ENCODE measurements at regions of chr10 and their contacts with region 1.

Region 1: DNA sequence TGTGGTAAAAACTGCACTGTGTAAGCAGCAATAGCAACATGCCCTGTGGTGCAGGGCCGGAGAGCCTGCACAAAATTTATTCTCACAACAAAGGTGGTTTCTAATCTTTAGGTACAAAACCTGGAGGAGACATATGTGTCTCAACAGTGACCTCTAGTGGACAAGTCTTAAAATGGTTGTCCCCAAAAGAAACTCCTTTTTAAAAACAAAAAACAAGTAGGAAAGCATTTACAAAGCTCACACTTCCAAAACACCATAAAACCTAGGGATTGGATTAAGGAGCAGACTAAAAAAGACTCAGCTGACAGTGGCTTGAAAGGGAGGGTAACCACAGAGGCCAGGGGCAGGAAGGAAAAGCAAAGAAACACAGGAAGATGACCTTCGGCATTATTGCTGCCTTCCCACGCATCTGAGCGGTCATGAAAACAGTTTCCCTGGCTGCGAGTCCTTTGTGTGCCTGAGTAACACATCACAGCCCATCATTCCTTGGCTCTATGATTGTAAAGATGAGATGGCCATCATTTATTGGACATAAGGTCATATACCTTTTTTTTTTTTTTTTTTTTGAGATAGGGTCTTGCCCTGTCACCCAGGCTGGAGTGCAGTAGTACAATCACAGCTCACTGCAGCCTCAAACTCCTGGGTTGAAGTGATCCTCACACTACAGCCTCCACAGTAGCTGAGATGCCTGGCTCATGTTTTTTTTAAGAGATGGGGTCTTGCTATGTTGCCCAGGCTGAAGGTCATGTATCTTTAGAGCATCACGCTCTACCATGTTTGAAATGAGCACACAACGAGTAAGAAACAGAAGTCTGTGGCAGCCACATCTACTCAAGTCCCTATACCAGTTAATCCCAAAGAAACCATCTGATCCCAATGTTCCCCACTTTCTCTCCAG is 39.5 kb downstream of the RSU1 start:
- DNase-seq: peak in 1 of 2 experiments; percentile 4
- H3K4me3 ChIP-seq: no peak overlapping the region
- H3K27ac ChIP-seq: no peak overlapping the region
- H3K4me1 ChIP-seq: no peaks in the 10 kb centered on the region
- H3K27me3 ChIP-seq: no peaks in the 10 kb centered on the region
- CTCF ChIP-seq: peak; percentile 79

Region 2: GRCh38 chr10:15433850-15434537 is 1343.7 kb before region 1 on chr10:
- CTCF ChIA-PET with region 1: no interaction called
- POLR2A ChIA-PET with region 1: no interaction called
- intact Hi-C with region 1: loop called (anchors 5 kb)
- DNase-seq: no peak
- H3K4me3 ChIP-seq: no peak overlapping the region
- H3K27ac ChIP-seq: no peak overlapping the region
- H3K4me1 ChIP-seq: no peaks in the 10 kb centered on the region
- H3K27me3 ChIP-seq: no peaks in the 10 kb centered on the region
- CTCF ChIP-seq: peak; percentile 69

Region 3: GRCh38 chr10:15901889-15902288 is 875.8 kb before region 1 on chr10:
- CTCF ChIA-PET with region 1: interaction called, 3 read pairs
- POLR2A ChIA-PET with region 1: no interaction called
- intact Hi-C with region 1: loop called (anchors 2 kb)
- DNase-seq: no peak
- H3K4me3 ChIP-seq: no peak overlapping the region
- H3K27ac ChIP-seq: no peak overlapping the region
- H3K4me1 ChIP-seq: no peaks in the 10 kb centered on the region
- H3K27me3 ChIP-seq: peaks cover 4% of the 10 kb centered on the region; the same call in 1 of the 2 replicates
- CTCF ChIP-seq: no peak

Region 4: GRCh38 chr10:16116404-16117304 is 661.1 kb before region 1 on chr10:
- CTCF ChIA-PET with region 1: no interaction called
- POLR2A ChIA-PET with region 1: no interaction called
- intact Hi-C with region 1: loop called (anchors 5 kb)
- DNase-seq: peak in 1 of 2 experiments; percentile 1
- H3K4me3 ChIP-seq: no peak overlapping the region
- H3K27ac ChIP-seq: no peak overlapping the region
- H3K4me1 ChIP-seq: no peaks in the 10 kb centered on the region
- H3K27me3 ChIP-seq: no peaks in the 10 kb centered on the region; the same call in 1 of the 2 replicates
- CTCF ChIP-seq: peak; percentile 60

Region 5: DNA sequence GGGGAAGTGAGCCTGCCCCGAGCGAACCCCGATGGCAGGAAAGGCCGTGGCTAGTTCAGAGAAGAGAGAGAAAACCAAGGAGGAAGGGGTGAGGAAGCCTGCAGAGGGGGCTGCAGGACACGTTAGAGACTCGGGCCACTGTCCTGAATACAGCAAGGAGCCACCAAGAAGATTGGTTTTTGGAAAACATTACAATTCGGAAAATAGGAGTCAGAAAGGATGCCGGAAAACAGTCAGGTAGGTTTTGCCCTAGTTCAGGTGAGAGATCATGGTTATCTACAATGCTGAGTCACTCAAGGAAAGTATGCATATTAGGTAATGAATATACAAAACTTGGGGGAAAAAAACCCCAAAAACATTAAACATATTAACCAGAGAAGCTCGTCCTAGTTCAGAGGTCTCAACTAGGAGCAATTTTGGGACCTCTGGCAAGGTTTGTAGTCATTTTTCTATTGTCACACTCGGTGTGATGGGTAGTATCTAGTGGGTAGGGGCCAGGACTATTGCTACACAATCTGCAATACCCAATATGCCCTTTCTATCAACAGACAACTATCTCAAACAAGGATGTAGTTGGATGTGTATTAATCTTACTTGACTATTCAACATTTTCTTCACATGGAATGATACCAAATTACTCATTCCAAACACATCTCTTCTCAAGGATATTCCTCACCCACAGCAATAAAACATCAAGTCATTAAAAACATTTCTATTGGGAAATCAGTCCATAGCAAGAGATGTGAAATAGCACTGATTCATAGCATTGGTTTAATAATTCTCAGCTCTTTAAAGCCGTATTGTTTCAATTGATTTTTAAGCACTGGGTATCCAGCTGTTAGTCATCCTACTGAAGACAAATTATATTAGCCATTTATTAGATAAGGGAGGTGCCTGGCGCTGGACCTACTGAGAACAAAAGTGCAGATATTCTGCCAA is 113.9 kb after region 1 on chr10:
- CTCF ChIA-PET with region 1: no interaction called
- POLR2A ChIA-PET with region 1: no interaction called
- intact Hi-C with region 1: no loop called
- DNase-seq: peak; percentile 35 to 95
- H3K4me3 ChIP-seq: peak overlapping the region; percentile 41; the same call in 1 of the 2 replicates
- H3K27ac ChIP-seq: peak overlapping the region; percentile 94
- H3K4me1 ChIP-seq: peaks cover 21% of the 10 kb centered on the region
- H3K27me3 ChIP-seq: peaks cover 6% of the 10 kb centered on the region; the same call in 1 of the 2 replicates
- CTCF ChIP-seq: peak; percentile 30; the same call in 1 of the 2 replicates

Measured in PC-9 (cell line).